ENCODE measurements at regions of chr2 and their contacts with region 1.

Region 1: DNA sequence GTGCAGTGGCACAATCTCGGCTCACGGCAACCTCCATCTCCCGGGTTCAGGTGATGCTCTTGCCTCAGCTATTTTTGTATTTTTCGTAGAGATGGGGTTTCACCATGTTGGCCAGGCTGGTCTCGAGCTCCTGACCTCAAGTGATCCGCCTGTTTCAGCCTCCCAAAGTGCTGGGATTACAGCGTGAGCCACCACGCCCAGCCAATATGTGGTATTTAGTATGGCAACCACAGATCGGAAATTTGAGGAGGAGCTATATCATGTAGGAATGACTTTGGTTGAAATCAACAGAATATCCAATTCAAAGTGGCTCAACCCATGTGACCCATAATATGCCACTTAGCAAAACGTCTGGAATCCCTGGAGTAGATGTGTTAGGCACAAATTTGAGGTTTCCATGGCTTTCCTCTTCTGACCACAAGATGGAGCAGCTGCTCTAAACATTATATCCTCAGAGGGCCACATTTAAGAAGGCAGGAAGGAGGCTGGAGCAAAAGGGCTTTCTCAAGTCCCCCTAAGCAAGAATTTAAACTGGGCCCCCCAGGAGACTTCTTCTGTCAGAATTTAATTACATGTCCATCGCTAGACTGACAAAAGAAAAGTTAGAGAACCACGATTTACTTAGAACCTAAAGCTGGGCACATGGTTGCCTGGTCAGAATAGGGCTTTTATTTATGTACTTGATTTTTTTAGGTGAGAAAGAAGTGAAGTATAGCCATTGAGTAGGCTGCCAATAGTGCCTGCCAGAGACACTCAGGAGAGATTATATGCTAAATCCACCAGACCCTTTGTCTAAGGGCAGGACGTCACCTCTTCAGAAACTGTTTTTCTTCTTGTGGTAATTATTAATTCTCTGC is 49.6 kb upstream of the ITSN2 start:
- DNase-seq: peak; percentile 59 to 80
- H3K4me3 ChIP-seq: no peak overlapping the region
- H3K4me1 ChIP-seq: peaks cover 6% of the 10 kb centered on the region
- H3K27me3 ChIP-seq: no peaks in the 10 kb centered on the region

Region 2: DNA sequence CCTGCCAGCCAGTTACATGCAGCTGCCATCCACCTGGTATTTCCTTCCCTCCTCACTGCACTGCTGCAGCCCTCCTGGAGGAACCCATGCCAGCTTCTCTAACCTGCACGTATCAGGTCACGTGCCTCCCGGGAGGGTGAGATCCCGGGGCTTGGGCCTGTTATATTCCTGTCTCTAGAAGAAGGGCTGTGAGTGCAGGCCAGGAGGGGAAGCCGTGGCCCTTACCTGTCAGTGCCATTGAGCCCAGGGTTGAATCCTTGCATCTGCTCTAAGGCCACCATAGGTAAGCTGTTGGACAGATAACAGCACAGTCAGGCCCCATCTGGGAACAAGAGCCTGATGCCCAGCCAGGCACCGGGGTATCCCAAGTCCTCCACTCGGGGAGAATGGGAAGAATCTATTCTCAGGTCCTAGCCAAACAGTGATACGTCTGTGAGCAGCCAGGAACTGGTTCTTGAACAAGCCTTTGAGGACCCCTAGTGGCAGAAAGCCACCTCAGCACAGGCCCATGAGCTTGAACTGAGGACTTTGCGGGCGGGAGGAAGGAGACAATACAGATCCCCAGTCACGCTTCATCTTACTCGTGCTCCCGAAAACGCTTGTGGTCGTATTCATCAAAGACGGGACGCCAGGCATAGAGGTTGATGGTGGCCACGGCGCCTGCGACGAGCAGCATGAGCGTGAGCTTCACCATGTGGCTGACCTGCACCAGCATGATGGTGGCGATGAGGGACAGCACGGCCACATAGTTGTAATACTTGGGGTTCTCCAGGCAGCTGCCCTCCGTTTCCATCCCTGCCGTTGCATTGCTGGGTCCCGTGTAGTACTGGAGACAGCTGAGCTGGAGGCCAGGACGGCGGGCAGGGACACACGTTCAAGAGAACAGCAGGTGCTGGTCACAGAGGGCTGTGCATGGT is 417.7 kb after region 1 on chr2:
- in situ Hi-C with region 1: loop called (anchors 5 kb)
- DNase-seq: peak; percentile 76 to 85
- H3K4me3 ChIP-seq: no peak overlapping the region
- H3K4me1 ChIP-seq: peaks cover 3% of the 10 kb centered on the region; the same call in 1 of the 2 replicates
- H3K27me3 ChIP-seq: no peaks in the 10 kb centered on the region

Region 3: GRCh38 chr2:25131567-25132298 is 721.8 kb after region 1 on chr2:
- in situ Hi-C with region 1: loop called (anchors 10 kb)
- DNase-seq: no peak
- H3K4me3 ChIP-seq: no peak overlapping the region
- H3K4me1 ChIP-seq: peaks cover 2% of the 10 kb centered on the region; the same call in 1 of the 2 replicates
- H3K27me3 ChIP-seq: no peaks in the 10 kb centered on the region

Region 4: GRCh38 chr2:25197336-25198208 is 787.6 kb after region 1 on chr2:
- in situ Hi-C with region 1: loop called (anchors 10 kb)
- DNase-seq: peak in 1 of 2 experiments; percentile 32
- H3K4me3 ChIP-seq: no peak overlapping the region
- H3K4me1 ChIP-seq: peaks cover 9% of the 10 kb centered on the region
- H3K27me3 ChIP-seq: no peaks in the 10 kb centered on the region

Measured in HAP-1 (cell line).